IMR-90 (cell line): ENCODE measurements at regions of chr5 and their contacts with region 1.

Region 1: GRCh38 chr5:36790838-36791237 is 85.7 kb upstream of the NIPBL start:
- DNase-seq: peak; percentile 7
- ATAC-seq: no peak
- H3K4me3 ChIP-seq: no peak overlapping the region
- H3K27ac ChIP-seq: no peak overlapping the region
- H3K4me1 ChIP-seq: no peaks in the 10 kb centered on the region
- H3K27me3 ChIP-seq: peaks cover 6% of the 10 kb centered on the region
- CTCF ChIP-seq: no peak
- POLR2A ChIP-seq: no peak
- RAD21 ChIP-seq: no peak

Region 2: GRCh38 chr5:36801521-36801920 is 10.7 kb after region 1 on chr5:
- CTCF ChIA-PET with region 1: no interaction called
- POLR2A ChIA-PET with region 1: interaction called, 12 read pairs
- dilution Hi-C with region 1: no loop called
- in situ Hi-C with region 1: no loop called
- intact Hi-C with region 1: no loop called
- DNase-seq: no peak
- ATAC-seq: no peak
- H3K4me3 ChIP-seq: no peak overlapping the region
- H3K27ac ChIP-seq: no peak overlapping the region
- H3K4me1 ChIP-seq: no peaks in the 10 kb centered on the region
- H3K27me3 ChIP-seq: peaks cover 3% of the 10 kb centered on the region; the same call in 1 of the 2 replicates
- CTCF ChIP-seq: no peak
- POLR2A ChIP-seq: no peak
- RAD21 ChIP-seq: no peak